Prostate gland (tissue), 2 donors: ENCODE measurements at regions of chr4 and their contacts with region 1.

Region 1: DNA sequence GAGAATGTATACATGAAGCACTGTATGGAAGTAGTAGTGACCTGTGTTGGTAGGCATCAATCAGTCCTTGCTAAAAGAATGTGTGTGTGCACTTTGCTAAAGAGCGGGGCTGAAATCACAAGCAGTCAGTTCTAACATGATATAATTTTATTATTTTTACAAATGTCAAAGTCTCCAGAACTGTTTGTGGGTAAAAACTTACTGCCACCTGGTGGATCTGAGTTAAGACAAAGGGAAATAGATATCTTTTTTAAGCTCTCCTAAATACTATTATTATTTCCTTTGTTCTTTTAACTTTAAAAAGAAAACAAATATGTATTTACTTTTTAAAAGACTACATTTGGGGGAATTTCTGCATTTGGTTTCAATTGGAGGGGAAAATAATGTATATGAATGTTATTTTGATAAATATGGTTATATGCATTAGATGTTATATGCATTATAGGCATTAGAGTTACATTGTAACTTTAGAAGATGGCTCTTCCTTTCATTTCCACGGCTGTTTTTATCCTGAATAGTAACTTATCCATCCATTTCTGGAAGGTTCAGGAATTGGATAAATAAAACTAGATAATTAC is 7.8 kb upstream of the CLOCK start:
- DNase-seq: no peak
- H3K4me3 ChIP-seq: no peak overlapping the region
- H3K27ac ChIP-seq: no peak overlapping the region
- H3K4me1 ChIP-seq: no peaks in the 10 kb centered on the region
- H3K27me3 ChIP-seq: no peaks in the 10 kb centered on the region
- CTCF ChIP-seq: peak; percentile 37 to 63 (median 44)
- POLR2A ChIP-seq: no peak

Region 2: DNA sequence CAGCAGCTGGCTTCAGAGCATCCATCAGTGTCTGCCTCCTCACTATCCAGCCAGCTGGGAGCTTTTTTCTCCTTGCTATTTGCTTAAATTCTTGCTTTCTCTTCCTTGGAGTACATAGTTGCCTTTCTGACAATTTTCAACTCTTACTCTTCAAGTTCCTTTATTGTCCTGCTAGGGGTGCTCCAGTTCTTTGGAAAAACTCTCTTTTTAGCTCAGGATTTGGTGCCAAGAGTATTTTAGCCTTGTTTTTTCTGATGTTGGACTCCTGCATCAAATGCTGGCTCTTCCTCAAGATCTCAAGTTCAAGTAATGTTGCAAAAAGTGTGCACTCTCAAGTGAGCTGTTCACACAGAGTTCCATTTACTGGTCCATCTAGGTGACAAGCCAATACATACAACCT is 555.5 kb before region 1 on chr4:
- intact Hi-C with region 1: loop called (anchors 10 kb)
- DNase-seq: no peak
- H3K4me3 ChIP-seq: no peak overlapping the region
- H3K27ac ChIP-seq: no peak overlapping the region
- H3K4me1 ChIP-seq: no peaks in the 10 kb centered on the region
- H3K27me3 ChIP-seq: no peaks in the 10 kb centered on the region
- CTCF ChIP-seq: peak in 1 of 4 experiments; percentile 59
- POLR2A ChIP-seq: no peak

Region 3: DNA sequence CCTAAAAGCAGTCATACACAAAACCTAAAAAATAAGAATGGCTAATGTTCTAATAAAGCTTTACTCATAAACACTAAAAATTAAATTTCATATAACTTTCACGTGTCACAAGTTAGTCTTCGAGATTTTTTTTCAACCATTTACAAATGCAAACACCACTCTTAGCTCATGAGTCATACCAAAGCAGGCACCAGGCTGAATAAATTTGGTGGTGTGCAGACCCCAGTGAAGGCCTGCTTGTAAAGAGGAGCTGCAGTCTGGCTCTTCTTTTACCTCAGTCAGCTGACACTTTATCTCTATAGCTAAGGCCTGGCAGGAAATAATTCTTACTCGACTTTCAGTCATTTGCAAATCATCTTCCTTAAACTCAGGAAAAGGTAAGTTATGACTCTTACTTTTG is 45.3 kb before region 1 on chr4:
- intact Hi-C with region 1: no loop called
- DNase-seq: no peak
- H3K4me3 ChIP-seq: no peak overlapping the region
- H3K27ac ChIP-seq: no peak overlapping the region
- H3K4me1 ChIP-seq: no peaks in the 10 kb centered on the region
- H3K27me3 ChIP-seq: no peaks in the 10 kb centered on the region
- CTCF ChIP-seq: no peak
- POLR2A ChIP-seq: no peak